MCF 10A (cell line): ENCODE measurements at regions of chrX and their contacts with region 1.

Region 1: DNA sequence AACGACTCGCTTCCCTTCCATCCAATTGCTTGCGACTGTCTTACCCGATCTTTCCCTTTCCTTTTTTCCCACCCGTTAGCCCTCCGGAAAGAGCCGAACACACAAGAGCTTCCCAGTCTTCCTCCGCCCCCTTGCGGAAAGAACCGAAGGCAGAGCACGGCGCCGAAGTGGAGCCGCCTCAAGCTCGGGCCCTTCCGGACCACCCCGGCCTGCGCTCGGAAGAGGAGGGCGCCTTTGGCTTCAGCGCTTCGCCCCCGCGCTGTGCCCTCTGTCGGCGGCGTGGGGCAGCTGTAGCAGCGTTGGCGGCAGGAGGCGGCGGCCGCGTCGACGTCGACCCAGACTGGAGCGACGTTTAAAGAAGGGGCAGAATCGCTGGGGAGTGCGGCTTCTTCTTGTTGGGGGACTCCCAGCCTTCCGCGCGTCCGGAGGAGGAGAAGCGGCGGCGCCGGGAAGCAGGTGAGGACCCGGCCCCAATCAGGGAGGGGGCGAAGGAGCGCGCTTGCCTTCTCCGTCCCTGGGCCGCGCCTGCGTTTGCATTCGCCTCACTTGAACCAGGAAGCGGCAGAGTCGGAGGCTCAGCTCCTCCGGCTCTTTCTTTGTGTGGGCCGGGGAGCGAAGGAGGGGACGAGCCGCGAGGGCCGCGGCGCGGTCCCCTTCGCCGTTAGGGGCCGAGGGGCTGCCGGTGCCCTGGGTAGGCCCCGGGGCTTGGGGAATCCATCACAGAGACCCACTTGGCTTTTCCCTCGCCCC is at the start of gene ZBTB33:
- DNase-seq: peak; percentile 93
- H3K4me3 Mint-ChIP-seq: peak within 1 kb of the TSS; percentile 97
- H3K27ac Mint-ChIP-seq: peak within 1 kb of the TSS; percentile 99
- H3K4me1 Mint-ChIP-seq: peaks cover 6% of the 10 kb centered on the region
- H3K27me3 Mint-ChIP-seq: peaks cover 50% of the 10 kb centered on the region
- CTCF ChIP-seq: peak; percentile 46
- total RNA-seq, gene ZBTB33: 11.4 and 12.5 TPM in 2 replicates

Region 2: GRCh38 chrX:120262859-120263708 is 12.4 kb after region 1 on chrX:
- CTCF ChIA-PET with region 1: interaction called, 6 read pairs
- POLR2A ChIA-PET with region 1: interaction called, 35 read pairs
- intact Hi-C with region 1: no loop called
- DNase-seq: no peak
- H3K4me3 Mint-ChIP-seq: no peak overlapping the region
- H3K27ac Mint-ChIP-seq: no peak overlapping the region
- H3K4me1 Mint-ChIP-seq: peaks cover 11% of the 10 kb centered on the region
- H3K27me3 Mint-ChIP-seq: peaks cover 14% of the 10 kb centered on the region
- CTCF ChIP-seq: no peak

Region 3: GRCh38 chrX:120269373-120270035 is 18.8 kb after region 1 on chrX:
- CTCF ChIA-PET with region 1: interaction called, 6 read pairs
- POLR2A ChIA-PET with region 1: interaction called, 35 read pairs
- intact Hi-C with region 1: no loop called
- DNase-seq: peak; percentile 69
- H3K4me3 Mint-ChIP-seq: no peak overlapping the region
- H3K27ac Mint-ChIP-seq: peak overlapping the region; percentile 90
- H3K4me1 Mint-ChIP-seq: peaks cover 18% of the 10 kb centered on the region
- H3K27me3 Mint-ChIP-seq: no peaks in the 10 kb centered on the region
- CTCF ChIP-seq: no peak

Region 4: DNA sequence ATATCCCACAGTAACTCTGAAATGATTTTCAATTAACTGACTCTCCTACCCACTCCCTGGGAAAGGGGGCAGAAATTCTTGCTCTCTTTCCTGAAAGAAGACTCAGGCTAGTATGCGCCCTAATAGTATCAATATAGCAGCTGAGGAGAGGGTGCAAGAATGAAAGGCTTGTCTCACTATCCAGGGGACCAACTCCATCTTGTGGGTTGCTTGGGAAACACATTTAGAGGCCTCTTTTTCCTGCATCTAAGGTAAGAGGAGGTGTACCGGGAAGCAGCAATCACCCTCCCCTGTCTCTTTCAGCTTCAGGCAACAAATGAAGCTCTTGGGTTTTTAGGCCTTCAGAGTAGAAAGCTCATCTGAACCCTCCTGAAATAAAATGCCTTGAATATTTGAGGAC is 49.2 kb after region 1 on chrX:
- CTCF ChIA-PET with region 1: interaction called, 12 read pairs
- POLR2A ChIA-PET with region 1: interaction called, 4 read pairs
- intact Hi-C with region 1: loop called (anchors 1 kb)
- DNase-seq: peak; percentile 48
- H3K4me3 Mint-ChIP-seq: no peak overlapping the region
- H3K27ac Mint-ChIP-seq: no peak overlapping the region
- H3K4me1 Mint-ChIP-seq: no peaks in the 10 kb centered on the region
- H3K27me3 Mint-ChIP-seq: peaks cover 31% of the 10 kb centered on the region
- CTCF ChIP-seq: no peak

Region 5: DNA sequence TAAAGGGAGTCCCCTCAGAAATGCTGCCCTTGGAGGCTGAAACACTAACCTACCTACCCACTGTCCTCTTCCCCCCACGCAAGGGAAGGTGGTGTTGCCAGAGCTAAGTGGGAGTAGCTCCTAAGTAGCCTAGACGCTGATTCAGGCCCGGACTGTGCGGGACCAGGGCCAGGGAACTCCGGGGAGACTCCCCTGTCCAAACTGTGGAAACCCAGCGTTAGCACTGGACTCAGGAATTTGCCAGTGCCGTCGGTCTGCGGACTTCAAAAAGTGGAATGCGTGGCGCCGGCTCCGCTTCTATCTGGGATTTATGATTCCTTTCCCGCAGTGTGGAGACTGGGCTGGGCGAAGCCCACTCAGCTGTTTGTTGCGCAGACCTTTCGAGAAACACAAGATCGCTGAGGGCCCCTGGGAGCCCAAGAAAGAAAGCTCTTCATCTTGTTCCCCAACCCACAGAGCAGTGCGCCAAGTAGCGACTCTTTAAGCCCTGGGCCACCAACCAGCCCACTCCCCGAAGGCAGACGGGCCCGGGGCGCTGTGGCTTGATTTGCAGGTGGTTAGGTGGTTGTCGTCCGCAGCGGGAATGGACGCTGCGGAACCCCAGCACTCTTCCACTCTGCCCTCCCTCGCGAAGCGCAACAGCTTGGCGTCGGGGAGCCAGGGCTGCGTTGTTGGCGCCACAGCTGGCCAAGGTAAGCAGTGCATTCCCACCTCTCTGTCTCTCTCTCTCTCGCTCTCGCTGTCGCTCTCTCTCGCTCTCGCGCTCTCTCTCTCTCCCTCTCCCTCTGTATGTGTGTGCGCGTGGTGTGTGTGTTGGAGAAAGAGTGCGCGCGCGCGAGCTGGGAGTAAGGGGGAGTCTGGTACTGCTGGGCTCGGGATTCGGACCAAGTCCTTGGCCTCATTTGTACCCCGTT is 58.5 kb after region 1 on chrX:
- CTCF ChIA-PET with region 1: interaction called, 5 read pairs
- POLR2A ChIA-PET with region 1: interaction called, 5 read pairs
- intact Hi-C with region 1: loop called (anchors 2 kb)
- DNase-seq: peak; percentile 75
- H3K4me3 Mint-ChIP-seq: peak overlapping the region; percentile 73
- H3K27ac Mint-ChIP-seq: no peak overlapping the region
- H3K4me1 Mint-ChIP-seq: no peaks in the 10 kb centered on the region
- H3K27me3 Mint-ChIP-seq: peaks cover 18% of the 10 kb centered on the region
- CTCF ChIP-seq: peak; percentile 21

Region 6: GRCh38 chrX:120365320-120365719 is 114.6 kb after region 1 on chrX:
- CTCF ChIA-PET with region 1: no interaction called
- POLR2A ChIA-PET with region 1: no interaction called
- intact Hi-C with region 1: no loop called
- DNase-seq: peak; percentile 52
- H3K4me3 Mint-ChIP-seq: no peak overlapping the region
- H3K27ac Mint-ChIP-seq: no peak overlapping the region
- H3K4me1 Mint-ChIP-seq: no peaks in the 10 kb centered on the region
- H3K27me3 Mint-ChIP-seq: peaks cover 25% of the 10 kb centered on the region
- CTCF ChIP-seq: peak; percentile 42

Region 7: DNA sequence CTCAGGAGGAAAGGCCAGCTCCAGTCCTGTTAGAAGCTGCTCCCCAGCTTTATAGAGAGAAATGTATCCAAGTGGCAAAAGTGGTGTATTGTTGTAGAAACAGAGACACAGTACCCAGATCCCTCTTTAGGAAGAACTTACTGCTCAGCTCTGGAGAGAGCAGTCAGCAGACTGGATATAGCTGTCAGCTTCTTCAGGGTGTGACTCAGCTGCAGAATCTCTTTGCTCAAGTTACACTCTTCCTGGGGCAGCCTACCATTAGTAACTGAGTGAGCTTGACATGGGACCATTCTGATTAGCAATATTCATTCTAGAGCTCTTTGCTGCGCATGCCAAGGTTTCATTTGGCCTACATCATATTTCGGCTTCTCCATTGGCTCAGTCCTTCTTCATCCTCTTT is 151.7 kb after region 1 on chrX:
- CTCF ChIA-PET with region 1: no interaction called
- POLR2A ChIA-PET with region 1: no interaction called
- intact Hi-C with region 1: no loop called
- DNase-seq: peak; percentile 1
- H3K4me3 Mint-ChIP-seq: no peak overlapping the region
- H3K27ac Mint-ChIP-seq: no peak overlapping the region
- H3K4me1 Mint-ChIP-seq: no peaks in the 10 kb centered on the region
- H3K27me3 Mint-ChIP-seq: peaks cover 56% of the 10 kb centered on the region
- CTCF ChIP-seq: no peak